ENCODE measurements at regions of chr5 and their contacts with region 1.

Region 1: DNA sequence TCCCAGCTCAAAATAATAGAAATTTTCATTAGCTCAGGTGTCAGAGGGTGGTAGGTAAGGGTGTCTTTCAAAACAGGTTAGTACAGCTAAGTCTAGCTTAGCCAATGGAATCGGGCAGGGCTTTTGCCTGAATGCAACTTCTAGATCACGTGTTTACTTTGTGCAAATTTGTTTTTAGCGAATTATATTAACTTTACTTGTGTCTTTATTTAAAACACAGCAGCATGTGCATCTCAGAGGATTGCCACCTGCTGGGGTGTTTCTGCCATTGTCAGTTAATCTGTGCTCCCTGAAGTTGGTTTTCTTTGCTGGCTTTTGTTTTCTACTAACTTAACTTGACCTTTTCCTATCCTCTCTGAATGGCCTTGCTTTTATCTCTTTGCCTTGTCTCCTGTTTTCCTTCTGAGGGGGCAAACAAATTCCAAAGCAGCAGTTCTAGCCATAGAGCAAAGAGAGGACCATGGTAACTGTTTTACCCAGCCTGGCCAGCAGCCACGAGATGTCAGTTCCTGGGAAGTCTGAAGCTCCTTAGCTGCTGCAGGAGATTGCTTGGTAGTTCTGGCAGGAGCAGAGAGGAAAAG is 67.6 kb downstream of the ARHGEF28 start:
- DNase-seq: no peak
- ATAC-seq: peak; percentile 37
- H3K4me3 ChIP-seq: no peak overlapping the region
- H3K27ac ChIP-seq: peak overlapping the region; percentile 14; the same call in 1 of the 2 replicates
- H3K4me1 ChIP-seq: peaks cover 17% of the 10 kb centered on the region
- H3K27me3 ChIP-seq: no peaks in the 10 kb centered on the region
- CTCF ChIP-seq: peak; percentile 36 to 60 (median 38); a peak in 5 of 6 replicates
- EP300 ChIP-seq: no peak
- POLR2A ChIP-seq: no peak
- RAD21 ChIP-seq: peak; percentile 42

Region 2: DNA sequence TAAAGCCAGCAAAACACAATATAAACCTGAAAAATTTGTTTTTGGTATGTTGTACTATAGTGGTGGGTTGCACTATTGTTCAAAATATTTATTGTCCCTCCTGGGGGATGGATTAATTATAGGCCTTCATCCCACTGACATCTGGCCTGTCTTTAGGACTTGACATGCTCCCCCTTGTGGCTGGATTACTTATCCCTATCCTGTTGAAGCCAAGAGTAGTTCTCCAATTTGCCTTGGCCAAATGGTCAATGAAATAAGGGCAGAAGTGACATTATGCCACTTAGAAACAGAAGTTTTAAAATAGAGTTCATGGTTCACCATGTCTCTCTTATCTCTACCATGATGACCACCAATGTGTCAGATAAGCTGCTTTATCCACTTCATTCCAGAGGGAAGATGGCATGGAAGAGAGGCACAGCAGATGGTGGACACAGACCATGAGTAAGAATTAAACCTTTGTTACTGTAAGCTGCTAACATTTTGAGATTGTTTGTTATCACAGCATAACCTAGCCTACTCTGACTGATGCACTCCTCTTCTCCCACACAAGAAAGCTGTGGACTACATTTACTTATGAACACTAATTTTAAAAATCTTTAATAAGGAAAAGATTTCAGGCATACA is 96.8 kb before region 1 on chr5:
- CTCF ChIA-PET with region 1: interaction called, 90 read pairs
- POLR2A ChIA-PET with region 1: no interaction called
- RAD21 ChIA-PET with region 1: interaction called, 40 read pairs
- SMC1A ChIA-PET with region 1: interaction called, 64 read pairs
- in situ Hi-C with region 1: no loop called
- intact Hi-C with region 1: no loop called
- DNase-seq: no peak
- ATAC-seq: peak; percentile 65
- H3K4me3 ChIP-seq: no peak overlapping the region
- H3K27ac ChIP-seq: no peak overlapping the region
- H3K4me1 ChIP-seq: no peaks in the 10 kb centered on the region
- H3K27me3 ChIP-seq: no peaks in the 10 kb centered on the region
- CTCF ChIP-seq: peak; percentile 29 to 61 (median 57)
- EP300 ChIP-seq: no peak
- POLR2A ChIP-seq: no peak
- RAD21 ChIP-seq: 0 out of 2 replicates have a peak, but pooled peaks have one; percentile 15

Region 3: GRCh38 chr5:73648515-73648914 is 45.1 kb before region 1 on chr5:
- CTCF ChIA-PET with region 1: interaction called, 24 read pairs
- POLR2A ChIA-PET with region 1: interaction called, 28 read pairs
- RAD21 ChIA-PET with region 1: interaction called, 11 read pairs
- SMC1A ChIA-PET with region 1: interaction called, 68 read pairs
- in situ Hi-C with region 1: no loop called
- intact Hi-C with region 1: loop called (anchors 5 kb)
- DNase-seq: no peak
- ATAC-seq: no peak
- H3K4me3 ChIP-seq: no peak overlapping the region
- H3K27ac ChIP-seq: no peak overlapping the region
- H3K4me1 ChIP-seq: no peaks in the 10 kb centered on the region
- H3K27me3 ChIP-seq: no peaks in the 10 kb centered on the region; a peak in 1 of 4 replicates
- CTCF ChIP-seq: no peak
- EP300 ChIP-seq: no peak
- POLR2A ChIP-seq: no peak
- RAD21 ChIP-seq: no peak

Region 4: DNA sequence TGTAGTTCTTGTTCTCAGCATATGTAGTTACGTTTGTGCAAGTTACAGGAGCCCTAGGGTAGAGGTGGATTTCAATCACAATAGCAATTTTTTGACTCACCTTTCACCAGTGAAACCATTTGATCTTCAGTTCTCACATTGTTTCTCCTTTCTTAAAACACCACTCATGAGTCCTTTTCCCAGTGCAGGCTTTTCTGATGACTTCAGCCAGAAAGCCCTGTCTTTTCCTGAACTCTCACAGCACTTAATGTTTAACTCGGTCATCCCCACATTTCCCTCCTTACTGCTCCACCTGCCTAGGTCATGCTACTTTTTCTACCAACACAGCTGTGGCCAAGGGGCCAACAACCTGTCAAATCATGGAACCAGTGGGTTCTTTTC is 29.7 kb before region 1 on chr5:
- CTCF ChIA-PET with region 1: interaction called, 20 read pairs
- POLR2A ChIA-PET with region 1: interaction called, 6 read pairs
- RAD21 ChIA-PET with region 1: interaction called, 43 read pairs
- SMC1A ChIA-PET with region 1: interaction called, 104 read pairs
- in situ Hi-C with region 1: no loop called
- intact Hi-C with region 1: loop called (anchors 2 kb)
- DNase-seq: peak; percentile 76
- ATAC-seq: peak; percentile 64
- H3K4me3 ChIP-seq: no peak overlapping the region
- H3K27ac ChIP-seq: peak overlapping the region; percentile 69
- H3K4me1 ChIP-seq: peaks cover 30% of the 10 kb centered on the region
- H3K27me3 ChIP-seq: no peaks in the 10 kb centered on the region
- CTCF ChIP-seq: no peak
- EP300 ChIP-seq: peak in 1 of 2 experiments; percentile 33; a peak in 1 of 4 replicates
- POLR2A ChIP-seq: no peak
- RAD21 ChIP-seq: no peak

Region 5: GRCh38 chr5:73678322-73678740 is 15.2 kb before region 1 on chr5:
- CTCF ChIA-PET with region 1: interaction called, 22 read pairs
- POLR2A ChIA-PET with region 1: interaction called, 22 read pairs
- RAD21 ChIA-PET with region 1: interaction called, 37 read pairs
- SMC1A ChIA-PET with region 1: interaction called, 81 read pairs
- in situ Hi-C with region 1: no loop called
- intact Hi-C with region 1: no loop called
- DNase-seq: no peak
- ATAC-seq: peak; percentile 61
- H3K4me3 ChIP-seq: no peak overlapping the region
- H3K27ac ChIP-seq: no peak overlapping the region
- H3K4me1 ChIP-seq: peaks cover 15% of the 10 kb centered on the region
- H3K27me3 ChIP-seq: no peaks in the 10 kb centered on the region
- CTCF ChIP-seq: no peak
- EP300 ChIP-seq: no peak
- POLR2A ChIP-seq: no peak
- RAD21 ChIP-seq: no peak

Region 6: GRCh38 chr5:73716284-73716808 is 22.8 kb after region 1 on chr5:
- CTCF ChIA-PET with region 1: interaction called, 8 read pairs
- POLR2A ChIA-PET with region 1: interaction called, 4 read pairs
- RAD21 ChIA-PET with region 1: interaction called, 49 read pairs
- SMC1A ChIA-PET with region 1: interaction called, 34 read pairs
- in situ Hi-C with region 1: no loop called
- intact Hi-C with region 1: no loop called
- DNase-seq: no peak
- ATAC-seq: peak; percentile 96
- H3K4me3 ChIP-seq: no peak overlapping the region
- H3K27ac ChIP-seq: no peak overlapping the region
- H3K4me1 ChIP-seq: no peaks in the 10 kb centered on the region
- H3K27me3 ChIP-seq: no peaks in the 10 kb centered on the region
- CTCF ChIP-seq: 0 out of 6 replicates have a peak, but pooled peaks of 1 of the 3 experiments have one; percentile 2
- EP300 ChIP-seq: no peak
- POLR2A ChIP-seq: no peak
- RAD21 ChIP-seq: no peak

Region 7: DNA sequence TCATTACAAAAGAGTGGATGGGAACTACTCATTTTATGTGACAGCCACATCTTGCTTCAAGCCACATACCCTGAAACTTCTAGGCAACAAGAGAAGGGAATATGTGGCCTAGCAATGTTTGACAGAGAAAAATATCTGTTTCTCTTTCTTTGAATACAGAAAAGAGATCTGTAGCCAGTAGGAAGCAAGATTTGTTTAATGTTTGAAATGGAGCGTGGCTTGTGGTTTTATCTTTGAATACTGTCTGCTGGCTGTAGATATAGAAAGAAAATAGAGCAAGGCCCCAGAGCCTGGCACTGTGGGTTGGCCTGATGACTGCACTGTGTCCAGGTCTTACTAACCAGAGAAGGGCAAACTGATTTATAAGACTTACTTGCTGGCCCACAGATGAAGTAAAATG is 66.2 kb after region 1 on chr5:
- CTCF ChIA-PET with region 1: no interaction called
- POLR2A ChIA-PET with region 1: interaction called, 3 read pairs
- RAD21 ChIA-PET with region 1: interaction called, 7 read pairs
- SMC1A ChIA-PET with region 1: interaction called, 10 read pairs
- in situ Hi-C with region 1: no loop called
- intact Hi-C with region 1: no loop called
- DNase-seq: no peak
- ATAC-seq: peak; percentile 67
- H3K4me3 ChIP-seq: no peak overlapping the region
- H3K27ac ChIP-seq: no peak overlapping the region
- H3K4me1 ChIP-seq: no peaks in the 10 kb centered on the region
- H3K27me3 ChIP-seq: no peaks in the 10 kb centered on the region
- CTCF ChIP-seq: no peak
- EP300 ChIP-seq: no peak
- POLR2A ChIP-seq: no peak
- RAD21 ChIP-seq: no peak